GM10248 (cell line): ENCODE measurements at regions of chr7 and their contacts with region 1.

Region 1: DNA sequence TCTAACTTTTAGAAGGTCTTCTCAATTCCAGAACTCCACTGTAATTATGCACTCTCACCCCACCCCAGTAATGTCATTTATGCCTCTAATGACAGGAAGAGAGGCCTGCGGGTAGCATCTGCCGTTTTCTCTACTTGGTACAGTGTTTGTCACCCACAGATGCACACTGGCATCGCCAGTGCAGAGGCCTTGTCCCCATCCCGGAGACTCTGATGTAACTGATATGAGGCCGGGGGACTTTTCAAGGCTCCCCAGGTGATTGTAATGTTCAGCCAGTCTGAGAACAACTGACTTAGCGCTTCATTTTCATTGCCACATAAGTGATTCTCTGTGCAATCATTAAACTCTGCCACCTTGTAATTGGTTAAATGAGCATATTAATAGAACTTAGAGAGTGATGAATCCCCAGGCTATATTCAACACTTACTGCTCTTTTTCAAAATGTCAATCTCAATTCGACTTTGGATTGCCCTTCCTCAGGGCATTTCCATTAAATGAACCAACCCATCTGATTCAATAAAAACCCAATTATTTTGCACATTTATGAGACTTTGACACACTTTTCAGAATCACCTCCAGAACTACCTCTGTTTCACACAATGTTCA is 113.2 kb downstream of the HERPUD2 start:
- DNase-seq: no peak
- CTCF ChIP-seq: no peak

Region 2: DNA sequence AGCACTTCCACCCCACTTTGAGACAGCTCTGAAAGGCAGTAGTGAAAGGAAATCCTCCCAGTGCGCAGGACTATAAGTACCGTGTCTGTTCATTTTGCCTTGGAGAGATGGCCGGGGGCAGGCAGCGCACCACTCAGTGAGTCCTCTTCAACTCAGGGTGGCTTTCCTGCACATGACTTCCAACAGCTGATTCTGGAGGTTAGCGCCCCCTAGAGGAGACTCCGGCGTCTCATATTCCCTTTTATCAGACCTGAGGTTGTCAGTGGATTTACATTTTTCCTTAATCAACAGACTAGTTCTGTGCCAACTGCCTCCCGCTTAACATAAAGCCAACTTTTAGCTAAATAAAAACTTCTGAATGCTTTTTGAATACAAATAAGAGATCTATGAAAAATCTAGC is 12.2 kb after region 1 on chr7:
- CTCF ChIA-PET with region 1: interaction called, 10 read pairs
- POLR2A ChIA-PET with region 1: no interaction called
- DNase-seq: peak; percentile 30
- CTCF ChIP-seq: peak; percentile 12